Heart right ventricle (tissue), 16 donors: ENCODE measurements at regions of chr17 and their contacts with region 1.

Region 1: DNA sequence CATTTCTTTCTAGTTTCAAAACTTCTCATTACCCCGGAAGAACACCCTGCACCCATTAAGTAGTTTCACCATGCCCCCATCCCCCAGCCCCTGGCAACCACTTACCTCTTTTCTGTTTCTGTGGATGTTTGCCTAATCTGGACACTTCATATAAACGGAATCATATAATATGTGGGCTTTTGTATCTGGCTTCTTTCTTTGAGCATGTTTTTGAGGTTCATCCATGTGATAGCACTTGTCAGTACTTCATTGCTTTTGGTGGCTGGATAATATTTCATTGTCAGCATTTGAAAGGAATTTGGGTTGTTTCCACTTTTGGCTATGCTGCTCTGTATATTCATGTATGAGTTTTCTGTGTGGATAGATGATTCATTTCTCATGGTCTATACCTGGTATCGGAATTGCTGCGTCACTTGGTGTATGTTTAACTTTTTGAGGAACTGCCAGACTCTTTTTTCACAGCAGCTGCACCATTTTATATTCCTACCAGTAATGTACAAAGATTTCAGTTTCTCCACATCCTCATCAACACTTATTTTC is 30.0 kb upstream of the SLC5A10 start:
- DNase-seq: no peak
- ATAC-seq: no peak
- H3K4me3 ChIP-seq: no peak overlapping the region
- H3K27ac ChIP-seq: no peak overlapping the region
- H3K4me1 ChIP-seq: peaks cover 0 to 30% (median 18%) of the 10 kb centered on the region in 9 donors
- H3K27me3 ChIP-seq: no peaks in the 10 kb centered on the region
- CTCF ChIP-seq: no peak

Region 2: DNA sequence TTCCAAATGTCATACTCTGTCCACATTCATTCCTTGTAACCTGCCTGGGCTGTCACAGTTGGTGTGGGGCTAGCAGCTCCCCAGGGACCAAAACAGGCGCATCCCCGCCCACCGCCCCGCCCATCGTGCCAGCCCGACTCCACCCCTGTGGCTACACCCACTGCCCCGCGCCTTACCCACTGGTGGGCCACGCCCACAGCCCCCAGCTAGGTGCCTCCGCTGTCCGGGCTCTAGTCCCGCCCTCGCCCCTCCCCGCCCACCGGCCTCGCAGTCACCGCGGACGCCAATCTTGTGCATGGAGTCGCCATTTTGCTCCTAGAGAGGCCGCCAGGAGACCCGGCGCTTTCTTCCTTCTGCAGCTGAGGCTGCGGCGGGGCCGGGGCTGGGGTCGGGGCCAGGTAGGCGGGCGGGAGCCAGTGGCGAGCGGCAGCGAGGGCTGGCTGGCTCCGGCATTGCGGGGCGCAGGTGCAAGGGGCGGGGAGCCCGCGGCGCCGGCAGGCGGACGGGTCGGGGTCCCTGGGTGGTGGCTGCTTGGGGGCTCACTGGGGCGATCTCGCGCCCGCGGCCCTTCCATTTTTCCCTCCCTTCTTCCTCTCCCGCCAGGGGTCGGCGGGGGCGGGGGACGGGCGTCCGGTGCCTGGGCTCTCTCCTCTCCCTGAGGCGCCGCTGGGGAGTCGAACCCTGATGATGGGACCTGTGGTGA is 64.0 kb before region 1 on chr17 and contains the start of gene PRPSAP2:
- intact Hi-C with region 1: loop called in 1 of 10 experiments (anchors 2 kb)
- DNase-seq: peak; percentile 95
- ATAC-seq: peak; percentile 92 to 97 (median 96)
- H3K4me3 ChIP-seq: peak within 1 kb of the TSS; percentile 79 to 99 (median 96)
- H3K27ac ChIP-seq: peak within 1 kb of the TSS; percentile 92 to 97 (median 96)
- H3K4me1 ChIP-seq: peaks cover 0 to 50% (median 30%) of the 10 kb centered on the region in 9 donors
- H3K27me3 ChIP-seq: no peaks in the 10 kb centered on the region
- CTCF ChIP-seq: no peak
- total RNA-seq, gene PRPSAP2: 12.8 to 23.2 (median 16.2) TPM

Region 3: GRCh38 chr17:18889658-18890057 is 32.3 kb before region 1 on chr17:
- intact Hi-C with region 1: loop called in 1 of 10 experiments (anchors 2 kb)
- DNase-seq: no peak
- ATAC-seq: no peak
- H3K4me3 ChIP-seq: no peak overlapping the region
- H3K27ac ChIP-seq: peak overlapping the region in 1 of 10 donors; percentile 8
- H3K4me1 ChIP-seq: peaks cover 0 to 15% (median 3%) of the 10 kb centered on the region in 9 donors
- H3K27me3 ChIP-seq: no peaks in the 10 kb centered on the region
- CTCF ChIP-seq: no peak

Region 4: GRCh38 chr17:18968945-18969887 is 47.2 kb after region 1 on chr17:
- intact Hi-C with region 1: no loop called
- DNase-seq: no peak
- ATAC-seq: peak in 1 of 8 donors; percentile 23
- H3K4me3 ChIP-seq: no peak overlapping the region
- H3K27ac ChIP-seq: no peak overlapping the region
- H3K4me1 ChIP-seq: peaks cover 0 to 7% (median 0%) of the 10 kb centered on the region in 9 donors
- H3K27me3 ChIP-seq: no peaks in the 10 kb centered on the region
- CTCF ChIP-seq: no peak

Region 5: GRCh38 chr17:18981642-18982424 is 59.9 kb after region 1 on chr17:
- intact Hi-C with region 1: loop called in 1 of 10 experiments (anchors 10 kb)
- DNase-seq: no peak
- ATAC-seq: no peak
- H3K4me3 ChIP-seq: no peak overlapping the region
- H3K27ac ChIP-seq: no peak overlapping the region
- H3K4me1 ChIP-seq: no peaks in the 10 kb centered on the region
- H3K27me3 ChIP-seq: no peaks in the 10 kb centered on the region
- CTCF ChIP-seq: no peak